B cell (primary cell): ENCODE measurements at regions of chr5 and their contacts with region 1.

Region 1: GRCh38 chr5:31581498-31582099 is 49.5 kb downstream of the C5orf22 start:
- DNase-seq: peak; percentile 42
- ATAC-seq: no peak
- H3K4me3 ChIP-seq: no peak overlapping the region
- H3K4me3 Mint-ChIP-seq: no peak overlapping the region
- H3K27ac ChIP-seq: no peak overlapping the region
- H3K27ac Mint-ChIP-seq: no peak overlapping the region
- H3K4me1 ChIP-seq: no peaks in the 10 kb centered on the region
- H3K4me1 Mint-ChIP-seq: no peaks in the 10 kb centered on the region
- H3K27me3 ChIP-seq: peaks cover 0 to 2% (median 0%) of the 10 kb centered on the region in 4 experiments
- H3K27me3 Mint-ChIP-seq: peaks cover 28% of the 10 kb centered on the region
- CTCF ChIP-seq: peak; percentile 69

Region 2: DNA sequence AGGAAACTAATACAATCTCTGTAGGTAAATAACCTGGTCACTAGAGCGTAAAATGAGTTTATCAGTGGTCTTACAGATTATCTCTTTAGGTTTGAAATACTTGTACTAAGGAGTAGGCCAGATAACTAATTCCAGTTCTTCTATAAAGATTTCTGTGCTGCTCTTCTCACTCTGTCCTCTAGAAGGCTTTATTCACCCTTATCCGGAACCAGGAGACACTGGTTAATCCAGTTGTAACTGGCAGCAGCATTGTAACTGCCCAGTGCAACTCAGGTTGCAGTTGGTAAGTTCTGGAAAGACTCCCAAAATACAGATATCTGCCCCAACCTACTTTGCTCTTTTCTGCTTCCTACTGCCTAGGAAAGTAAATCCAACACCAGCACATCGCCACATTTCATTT is 29.7 kb before region 1 on chr5:
- CTCF ChIA-PET with region 1: no interaction called
- POLR2A ChIA-PET with region 1: no interaction called
- intact Hi-C with region 1: no loop called
- DNase-seq: no peak
- ATAC-seq: no peak
- H3K4me3 ChIP-seq: no peak overlapping the region
- H3K4me3 Mint-ChIP-seq: no peak overlapping the region
- H3K27ac ChIP-seq: no peak overlapping the region
- H3K27ac Mint-ChIP-seq: no peak overlapping the region
- H3K4me1 ChIP-seq: no peaks in the 10 kb centered on the region
- H3K4me1 Mint-ChIP-seq: no peaks in the 10 kb centered on the region
- H3K27me3 ChIP-seq: no peaks in the 10 kb centered on the region
- H3K27me3 Mint-ChIP-seq: no peaks in the 10 kb centered on the region
- CTCF ChIP-seq: no peak

Region 3: GRCh38 chr5:31656806-31657205 is 75.2 kb after region 1 on chr5:
- CTCF ChIA-PET with region 1: no interaction called
- POLR2A ChIA-PET with region 1: no interaction called
- intact Hi-C with region 1: no loop called
- DNase-seq: no peak
- ATAC-seq: no peak
- H3K4me3 ChIP-seq: no peak overlapping the region
- H3K4me3 Mint-ChIP-seq: no peak overlapping the region
- H3K27ac ChIP-seq: no peak overlapping the region
- H3K27ac Mint-ChIP-seq: no peak overlapping the region
- H3K4me1 ChIP-seq: no peaks in the 10 kb centered on the region
- H3K4me1 Mint-ChIP-seq: no peaks in the 10 kb centered on the region
- H3K27me3 ChIP-seq: no peaks in the 10 kb centered on the region
- H3K27me3 Mint-ChIP-seq: peaks cover 22% of the 10 kb centered on the region
- CTCF ChIP-seq: no peak

Region 4: GRCh38 chr5:31894141-31894540 is 312.5 kb after region 1 on chr5:
- CTCF ChIA-PET with region 1: no interaction called
- POLR2A ChIA-PET with region 1: no interaction called
- intact Hi-C with region 1: no loop called
- DNase-seq: no peak
- ATAC-seq: no peak
- H3K4me3 ChIP-seq: no peak overlapping the region
- H3K4me3 Mint-ChIP-seq: no peak overlapping the region
- H3K27ac ChIP-seq: no peak overlapping the region
- H3K27ac Mint-ChIP-seq: no peak overlapping the region
- H3K4me1 ChIP-seq: no peaks in the 10 kb centered on the region
- H3K4me1 Mint-ChIP-seq: no peaks in the 10 kb centered on the region
- H3K27me3 ChIP-seq: no peaks in the 10 kb centered on the region
- H3K27me3 Mint-ChIP-seq: no peaks in the 10 kb centered on the region
- CTCF ChIP-seq: no peak

Region 5: DNA sequence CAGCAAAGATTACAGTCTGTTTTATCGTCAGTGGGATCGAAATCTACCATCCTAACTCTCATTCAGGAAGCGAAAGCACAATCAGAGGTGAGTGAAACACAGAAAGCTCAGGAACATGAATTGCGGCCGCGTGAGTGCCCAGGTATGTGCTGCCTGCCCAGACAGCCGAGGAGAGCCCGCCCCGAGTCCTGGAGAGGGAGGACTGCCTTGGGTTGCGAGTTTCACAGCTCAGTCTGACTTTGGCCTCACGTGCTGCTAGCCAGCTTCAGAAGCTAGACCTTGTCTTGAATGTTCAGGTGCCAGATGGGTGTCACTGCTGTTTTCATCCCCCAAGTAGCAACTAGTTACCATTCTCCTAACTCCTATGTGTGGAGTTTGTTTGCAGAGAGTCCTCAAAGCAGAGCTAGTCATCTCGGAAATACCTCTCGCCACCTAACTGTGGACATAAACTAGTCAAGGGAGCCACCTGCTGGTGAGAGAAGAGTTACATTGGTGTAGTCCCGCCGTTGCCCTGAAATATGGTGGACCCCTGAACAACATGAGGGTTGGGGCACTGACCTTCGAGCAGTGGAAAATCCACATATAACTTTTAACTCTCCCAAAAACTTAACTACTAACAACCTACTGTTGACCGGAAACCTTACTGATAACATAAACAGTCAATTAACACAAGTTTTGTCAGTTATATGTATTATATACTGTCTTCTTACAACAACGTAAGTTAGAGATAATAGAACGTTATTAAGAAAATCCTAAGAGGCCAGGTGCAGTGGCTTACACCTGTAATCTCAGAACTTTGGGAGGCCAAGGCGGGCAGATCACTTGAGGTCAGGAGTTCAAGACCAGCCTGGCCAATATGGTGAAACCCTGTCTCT is 511.6 kb after region 1 on chr5:
- CTCF ChIA-PET with region 1: interaction called, 15 read pairs
- POLR2A ChIA-PET with region 1: no interaction called
- intact Hi-C with region 1: no loop called
- DNase-seq: peak; percentile 66
- ATAC-seq: peak; percentile 60
- H3K4me3 ChIP-seq: no peak overlapping the region
- H3K4me3 Mint-ChIP-seq: no peak overlapping the region
- H3K27ac ChIP-seq: no peak overlapping the region
- H3K27ac Mint-ChIP-seq: no peak overlapping the region
- H3K4me1 ChIP-seq: peaks cover 0 to 5% of the 10 kb centered on the region in 2 donors
- H3K4me1 Mint-ChIP-seq: peaks cover 5% of the 10 kb centered on the region
- H3K27me3 ChIP-seq: no peaks in the 10 kb centered on the region
- H3K27me3 Mint-ChIP-seq: no peaks in the 10 kb centered on the region
- CTCF ChIP-seq: peak; percentile 72

Region 6: DNA sequence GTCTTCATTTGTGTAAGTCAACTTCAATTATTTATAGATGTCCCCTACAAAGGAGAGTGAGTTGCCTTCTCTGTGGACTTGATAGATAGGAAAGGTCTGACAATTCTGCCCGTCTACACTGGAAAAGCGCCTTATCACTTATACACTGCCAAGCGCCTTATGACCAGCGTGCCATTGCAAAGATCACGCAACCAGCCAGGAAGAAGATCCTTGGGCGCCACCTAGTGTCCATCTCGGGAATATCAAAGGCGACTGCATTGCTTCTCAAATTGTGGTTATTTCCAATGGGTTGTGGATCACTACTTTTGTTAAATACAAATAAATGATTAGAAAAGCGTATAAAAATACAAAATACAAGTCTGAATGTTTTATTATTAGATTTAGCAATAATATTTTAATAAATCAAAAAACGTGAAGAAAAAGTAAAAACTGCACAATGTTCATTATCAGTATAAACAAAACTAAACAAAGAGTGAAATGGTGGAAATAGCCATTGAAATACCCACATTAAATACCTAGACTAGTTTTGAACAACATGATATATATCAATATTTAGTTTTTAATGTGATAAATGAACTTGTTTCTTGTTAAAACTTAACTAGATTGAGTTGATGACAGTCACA is 1031.6 kb after region 1 on chr5:
- CTCF ChIA-PET with region 1: no interaction called
- POLR2A ChIA-PET with region 1: no interaction called
- intact Hi-C with region 1: loop called (anchors 5 kb)
- DNase-seq: peak; percentile 81
- ATAC-seq: peak; percentile 77
- H3K4me3 ChIP-seq: no peak overlapping the region
- H3K4me3 Mint-ChIP-seq: no peak overlapping the region
- H3K27ac ChIP-seq: no peak overlapping the region
- H3K27ac Mint-ChIP-seq: peak overlapping the region; percentile 17
- H3K4me1 ChIP-seq: peaks cover 0 to 4% of the 10 kb centered on the region in 2 donors
- H3K4me1 Mint-ChIP-seq: peaks cover 3% of the 10 kb centered on the region
- H3K27me3 ChIP-seq: no peaks in the 10 kb centered on the region
- H3K27me3 Mint-ChIP-seq: no peaks in the 10 kb centered on the region
- CTCF ChIP-seq: peak; percentile 98

Region 7: GRCh38 chr5:33423018-33423630 is 1841.5 kb after region 1 on chr5:
- CTCF ChIA-PET with region 1: no interaction called
- POLR2A ChIA-PET with region 1: no interaction called
- intact Hi-C with region 1: loop called (anchors 5 kb)
- DNase-seq: peak; percentile 14
- ATAC-seq: no peak
- H3K4me3 ChIP-seq: no peak overlapping the region
- H3K4me3 Mint-ChIP-seq: no peak overlapping the region
- H3K27ac ChIP-seq: no peak overlapping the region
- H3K27ac Mint-ChIP-seq: no peak overlapping the region
- H3K4me1 ChIP-seq: no peaks in the 10 kb centered on the region
- H3K4me1 Mint-ChIP-seq: no peaks in the 10 kb centered on the region
- H3K27me3 ChIP-seq: peaks cover 0 to 7% (median 3%) of the 10 kb centered on the region in 4 experiments
- H3K27me3 Mint-ChIP-seq: peaks cover 19% of the 10 kb centered on the region
- CTCF ChIP-seq: peak; percentile 28